H1 (cell line): ENCODE measurements at regions of chr12 and their contacts with region 1.

Region 1: DNA sequence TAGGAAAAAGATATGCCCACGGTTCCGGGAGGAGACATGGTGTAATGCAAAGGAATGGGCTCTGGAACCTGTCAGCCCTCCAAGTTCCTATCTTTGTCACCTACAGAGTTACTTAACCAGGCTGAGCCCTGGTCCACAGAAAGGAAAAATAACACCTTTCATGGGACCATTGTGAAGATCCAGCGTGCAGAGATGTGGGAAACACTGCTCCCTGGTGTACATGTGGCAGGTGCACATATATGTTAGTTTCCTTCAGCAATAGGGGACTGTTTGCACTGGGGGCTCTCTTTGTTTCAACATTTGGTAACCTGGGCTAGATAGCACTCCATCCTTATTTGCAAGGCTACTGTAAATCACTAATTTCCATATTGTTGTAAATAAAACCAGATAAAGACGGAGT is 72.3 kb downstream of the ANO2 start:
- DNase-seq: no peak
- H3K4me3 ChIP-seq: no peak overlapping the region
- H3K27ac ChIP-seq: no peak overlapping the region
- H3K4me1 ChIP-seq: peaks cover 0 to 15% (median 4%) of the 10 kb centered on the region in 4 experiments; a peak in 5 of 7 replicates
- H3K27me3 ChIP-seq: no peaks in the 10 kb centered on the region
- CTCF ChIP-seq: peak; percentile 17 to 45 (median 17); a peak in 3 of 4 replicates
- EP300 ChIP-seq: no peak
- POLR2A ChIP-seq: no peak
- RAD21 ChIP-seq: peak; percentile 53 to 58

Region 2: GRCh38 chr12:5889381-5890047 is 16.8 kb after region 1 on chr12:
- CTCF ChIA-PET with region 1: interaction called, 18 read pairs
- POLR2A ChIA-PET with region 1: no interaction called
- DNase-seq: peak in 1 of 2 experiments; percentile 80
- H3K4me3 ChIP-seq: no peak overlapping the region
- H3K27ac ChIP-seq: no peak overlapping the region
- H3K4me1 ChIP-seq: no peaks in the 10 kb centered on the region
- H3K27me3 ChIP-seq: no peaks in the 10 kb centered on the region; a peak in 1 of 7 replicates
- CTCF ChIP-seq: peak; percentile 3 to 42 (median 30); a peak in 3 of 4 replicates
- EP300 ChIP-seq: no peak
- POLR2A ChIP-seq: no peak
- RAD21 ChIP-seq: 0 out of 4 replicates have a peak, but pooled peaks of 1 of the 2 experiments have one; percentile 4